ENCODE measurements at regions of chr6 and their contacts with region 1.

Region 1: DNA sequence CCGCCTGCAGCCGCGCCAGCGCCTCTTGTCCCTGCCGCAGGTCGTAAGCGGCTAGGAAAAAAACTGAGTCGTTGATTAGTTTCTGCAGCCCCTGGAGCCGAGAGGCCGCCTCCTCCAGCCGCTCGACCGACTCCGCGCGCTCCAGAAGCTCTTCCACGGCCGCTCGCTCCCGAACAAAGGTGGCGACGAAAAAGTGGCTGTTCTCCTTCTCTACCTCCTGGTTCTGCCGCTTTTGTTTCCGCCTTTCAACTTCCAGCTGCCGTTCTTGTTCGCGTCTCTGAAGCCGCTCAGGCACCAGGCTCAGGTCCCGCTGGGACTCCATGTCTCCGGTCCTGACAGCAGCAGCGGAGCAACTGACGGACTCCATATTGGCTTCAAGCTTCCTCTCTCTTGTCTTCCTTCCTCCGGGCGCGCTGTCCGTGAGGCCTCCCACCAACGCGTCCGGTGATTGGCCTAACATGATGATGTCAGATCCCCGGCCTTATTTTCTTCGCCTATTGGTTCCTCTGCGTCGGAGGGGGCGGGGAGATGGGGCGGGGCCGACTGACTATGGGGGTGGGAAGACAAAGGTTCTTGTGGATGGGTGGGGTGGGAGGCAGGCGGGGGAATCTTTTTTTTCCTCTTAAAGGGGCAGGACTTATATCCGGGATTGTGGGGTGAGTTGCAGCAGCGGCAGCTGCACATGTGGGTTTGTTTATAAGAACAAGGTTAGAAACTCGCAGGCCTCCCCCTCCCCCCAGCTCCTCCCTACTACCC is at the start of gene TBCC:
- DNase-seq: peak; percentile 73 to 97 (median 93)
- ATAC-seq: peak; percentile 88
- H3K4me3 ChIP-seq: peak within 1 kb of the TSS; percentile 95
- H3K4me3 Mint-ChIP-seq: peak within 1 kb of the TSS; percentile 91 to 100 (median 99)
- H3K27ac ChIP-seq: peak within 1 kb of the TSS; percentile 88
- H3K27ac Mint-ChIP-seq: peak within 1 kb of the TSS; percentile 97 to 100 (median 100)
- H3K4me1 ChIP-seq: peaks cover 19 to 29% of the 10 kb centered on the region in 2 donors
- H3K4me1 Mint-ChIP-seq: peaks cover 12 to 39% (median 27%) of the 10 kb centered on the region in 7 donors
- H3K27me3 ChIP-seq: no peaks in the 10 kb centered on the region
- H3K27me3 Mint-ChIP-seq: no peaks in the 10 kb centered on the region
- total RNA-seq, gene TBCC: 39.6 to 74.8 (median 71.4) TPM

Region 2: GRCh38 chr6:41909727-41910126 is 836.2 kb before region 1 on chr6:
- CTCF ChIA-PET with region 1: no interaction called
- POLR2A ChIA-PET with region 1: no interaction called
- intact Hi-C with region 1: no loop called
- DNase-seq: no peak
- ATAC-seq: no peak
- H3K4me3 ChIP-seq: no peak overlapping the region
- H3K4me3 Mint-ChIP-seq: no peak overlapping the region
- H3K27ac ChIP-seq: no peak overlapping the region
- H3K27ac Mint-ChIP-seq: no peak overlapping the region
- H3K4me1 ChIP-seq: no peaks in the 10 kb centered on the region
- H3K4me1 Mint-ChIP-seq: peaks cover 5 to 29% (median 18%) of the 10 kb centered on the region in 7 donors
- H3K27me3 ChIP-seq: no peaks in the 10 kb centered on the region
- H3K27me3 Mint-ChIP-seq: no peaks in the 10 kb centered on the region

Region 3: GRCh38 chr6:41920921-41921711 is 824.8 kb before region 1 on chr6 and contains the starts of genes BYSL and MED20:
- CTCF ChIA-PET with region 1: no interaction called
- POLR2A ChIA-PET with region 1: no interaction called
- intact Hi-C with region 1: loop called in 1 of 2 experiments (anchors 10 kb)
- DNase-seq: peak; percentile 93 to 99 (median 96)
- ATAC-seq: peak; percentile 96
- H3K4me3 ChIP-seq: peak within 1 kb of the TSS; percentile 76
- H3K4me3 Mint-ChIP-seq: peak within 1 kb of the TSS; percentile 95 to 100 (median 99)
- H3K27ac ChIP-seq: peak within 1 kb of the TSS; percentile 95
- H3K27ac Mint-ChIP-seq: peak within 1 kb of the TSS; percentile 94 to 100 (median 99)
- H3K4me1 ChIP-seq: peaks cover 20 to 24% of the 10 kb centered on the region in 2 donors
- H3K4me1 Mint-ChIP-seq: peaks cover 27 to 58% (median 50%) of the 10 kb centered on the region in 7 donors
- H3K27me3 ChIP-seq: no peaks in the 10 kb centered on the region
- H3K27me3 Mint-ChIP-seq: peaks cover 0 to 3% (median 0%) of the 10 kb centered on the region in 5 donors
- total RNA-seq, gene BYSL: 3.9 to 35.7 (median 8.1) TPM
- total RNA-seq, gene MED20: 4.5 to 21.7 (median 9.4) TPM

Region 4: GRCh38 chr6:42726485-42727086 is 19.3 kb before region 1 on chr6:
- CTCF ChIA-PET with region 1: interaction called, 11 read pairs
- POLR2A ChIA-PET with region 1: interaction called, 122 read pairs
- intact Hi-C with region 1: loop called (anchors 1 to 2 kb)
- DNase-seq: peak; percentile 20 to 87 (median 80)
- ATAC-seq: peak; percentile 99
- H3K4me3 ChIP-seq: peak overlapping the region; percentile 84
- H3K4me3 Mint-ChIP-seq: peak overlapping the region; percentile 76 to 96 (median 90)
- H3K27ac ChIP-seq: peak overlapping the region; percentile 74
- H3K27ac Mint-ChIP-seq: peak overlapping the region; percentile 89 to 99 (median 98)
- H3K4me1 ChIP-seq: peaks cover 6 to 14% of the 10 kb centered on the region in 2 donors
- H3K4me1 Mint-ChIP-seq: peaks cover 9 to 25% (median 20%) of the 10 kb centered on the region in 7 donors
- H3K27me3 ChIP-seq: no peaks in the 10 kb centered on the region
- H3K27me3 Mint-ChIP-seq: peaks cover 0 to 1% (median 0%) of the 10 kb centered on the region in 5 donors

Region 5: DNA sequence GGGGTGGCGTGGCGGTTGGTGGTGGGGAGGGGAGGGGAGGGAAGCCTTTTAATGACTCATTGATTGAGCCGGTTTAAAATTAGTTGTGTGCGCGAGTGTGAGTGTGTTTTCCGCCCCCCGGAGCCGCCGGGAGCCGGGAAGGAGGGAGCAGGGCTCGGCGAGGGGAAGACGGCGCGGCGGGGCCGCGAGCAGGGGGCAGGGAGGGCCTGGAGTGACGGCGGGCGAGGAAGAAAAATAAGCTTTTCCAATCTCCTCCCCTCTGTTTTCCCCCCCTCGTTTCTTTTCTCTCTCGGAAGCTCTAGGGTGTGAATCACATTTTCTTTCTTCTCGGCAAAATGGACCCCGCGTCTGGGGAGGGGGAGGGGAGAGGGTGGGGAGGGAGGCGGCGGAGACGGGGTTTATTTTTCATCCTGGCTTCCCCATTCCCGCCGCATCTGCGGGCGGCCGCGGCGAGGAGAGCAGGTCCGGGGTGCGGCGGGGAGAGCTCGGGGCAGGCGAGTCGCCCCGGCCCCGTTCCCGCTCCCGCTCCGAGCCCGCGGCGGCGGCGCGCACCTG is 36.8 kb after region 1 on chr6:
- CTCF ChIA-PET with region 1: interaction called, 8 read pairs
- POLR2A ChIA-PET with region 1: interaction called, 1,628 read pairs
- intact Hi-C with region 1: loop called (anchors 1 kb)
- DNase-seq: peak in 8 of 9 donors; percentile 65 to 88 (median 82)
- ATAC-seq: peak; percentile 75
- H3K4me3 ChIP-seq: peak overlapping the region; percentile 89
- H3K4me3 Mint-ChIP-seq: peak overlapping the region in 8 of 10 donors; percentile 89 to 100 (median 98)
- H3K27ac ChIP-seq: peak overlapping the region; percentile 100
- H3K27ac Mint-ChIP-seq: peak overlapping the region in 5 of 9 donors; percentile 99 to 100 (median 100)
- H3K4me1 ChIP-seq: peaks cover 36 to 45% of the 10 kb centered on the region in 2 donors
- H3K4me1 Mint-ChIP-seq: peaks cover under 1 to 35% (median 30%) of the 10 kb centered on the region in 7 donors
- H3K27me3 ChIP-seq: no peaks in the 10 kb centered on the region
- H3K27me3 Mint-ChIP-seq: no peaks in the 10 kb centered on the region

Region 6: GRCh38 chr6:42890311-42891198 is 144.7 kb after region 1 on chr6:
- CTCF ChIA-PET with region 1: no interaction called
- POLR2A ChIA-PET with region 1: interaction called, 24 read pairs
- intact Hi-C with region 1: loop called (anchors 1 to 2 kb)
- DNase-seq: peak; percentile 70 to 90 (median 87)
- ATAC-seq: peak; percentile 99
- H3K4me3 ChIP-seq: peak overlapping the region; percentile 89
- H3K4me3 Mint-ChIP-seq: peak overlapping the region; percentile 94 to 100 (median 98)
- H3K27ac ChIP-seq: peak overlapping the region; percentile 87
- H3K27ac Mint-ChIP-seq: peak overlapping the region; percentile 89 to 99 (median 98)
- H3K4me1 ChIP-seq: peaks cover 0 to 8% of the 10 kb centered on the region in 2 donors
- H3K4me1 Mint-ChIP-seq: peaks cover 0 to 26% (median 14%) of the 10 kb centered on the region in 7 donors
- H3K27me3 ChIP-seq: no peaks in the 10 kb centered on the region
- H3K27me3 Mint-ChIP-seq: no peaks in the 10 kb centered on the region

Region 7: GRCh38 chr6:43369174-43370022 is 623.5 kb after region 1 on chr6 and contains the start of gene ZNF318:
- CTCF ChIA-PET with region 1: no interaction called
- POLR2A ChIA-PET with region 1: no interaction called
- intact Hi-C with region 1: loop called in 1 of 2 experiments (anchors 2 kb)
- DNase-seq: peak; percentile 85 to 95 (median 93)
- ATAC-seq: peak; percentile 97
- H3K4me3 ChIP-seq: peak within 1 kb of the TSS; percentile 90
- H3K4me3 Mint-ChIP-seq: peak within 1 kb of the TSS; percentile 75 to 97 (median 92)
- H3K27ac ChIP-seq: peak within 1 kb of the TSS; percentile 87
- H3K27ac Mint-ChIP-seq: peak within 1 kb of the TSS; percentile 91 to 98 (median 95)
- H3K4me1 ChIP-seq: peaks cover 20 to 23% of the 10 kb centered on the region in 2 donors
- H3K4me1 Mint-ChIP-seq: peaks cover 28 to 56% (median 50%) of the 10 kb centered on the region in 7 donors
- H3K27me3 ChIP-seq: no peaks in the 10 kb centered on the region
- H3K27me3 Mint-ChIP-seq: peaks cover 0 to 17% (median 0%) of the 10 kb centered on the region in 5 donors
- total RNA-seq, gene ZNF318: 15.8 to 40.2 (median 28.3) TPM

Region 8: DNA sequence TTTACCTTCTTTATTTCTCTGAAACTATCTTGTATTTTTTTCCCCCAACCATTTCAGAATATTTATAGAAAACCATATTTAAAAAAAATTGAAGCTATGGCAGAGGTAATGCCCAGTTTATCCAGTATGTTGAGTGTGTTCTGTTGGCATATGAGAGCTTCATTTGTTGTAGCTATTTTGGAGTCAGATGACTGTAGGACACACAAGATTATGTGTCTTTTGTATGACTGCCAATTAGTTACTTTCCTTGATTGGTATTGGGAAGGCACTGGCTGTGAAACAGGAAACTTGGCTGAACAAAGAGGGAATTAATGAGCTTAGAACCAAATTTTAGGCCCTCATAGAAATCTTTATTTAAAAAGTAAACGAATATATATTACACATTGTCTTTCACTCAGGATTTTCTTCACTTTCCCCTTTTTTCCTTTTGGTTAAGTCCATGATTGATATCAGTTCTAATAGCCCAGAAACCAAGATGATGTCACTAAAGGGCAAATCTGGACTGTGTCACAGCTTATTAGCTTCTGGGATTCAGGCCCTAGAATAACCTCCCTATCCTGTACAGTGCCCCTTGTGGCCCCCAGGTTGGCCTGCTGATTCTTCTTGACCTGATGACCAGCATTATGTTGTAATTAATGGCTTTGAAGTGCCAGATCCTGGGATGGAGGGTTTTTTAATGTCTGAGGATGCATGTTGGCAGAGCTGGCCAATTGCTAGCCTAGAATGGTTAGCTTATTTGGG is 1651.7 kb after region 1 on chr6:
- CTCF ChIA-PET with region 1: no interaction called
- POLR2A ChIA-PET with region 1: no interaction called
- intact Hi-C with region 1: no loop called
- DNase-seq: no peak
- ATAC-seq: no peak
- H3K4me3 ChIP-seq: no peak overlapping the region
- H3K4me3 Mint-ChIP-seq: no peak overlapping the region
- H3K27ac ChIP-seq: no peak overlapping the region
- H3K27ac Mint-ChIP-seq: peak overlapping the region in 2 of 9 donors; percentile 46 to 52
- H3K4me1 ChIP-seq: no peaks in the 10 kb centered on the region
- H3K4me1 Mint-ChIP-seq: peaks cover 26 to 58% (median 32%) of the 10 kb centered on the region in 7 donors
- H3K27me3 ChIP-seq: no peaks in the 10 kb centered on the region
- H3K27me3 Mint-ChIP-seq: no peaks in the 10 kb centered on the region

Measured in naive thymus-derived CD4-positive, alpha-beta T cell (primary cell).